CD8-positive, alpha-beta T cell (primary cell): ENCODE measurements at regions of chr18 and their contacts with region 1.

Region 1: GRCh38 chr18:31610286-31611205 is 18.9 kb downstream of the TTR start:
- DNase-seq: peak in 2 of 9 experiments; percentile 5 to 22
- ATAC-seq: no peak
- H3K4me3 ChIP-seq: no peak overlapping the region
- H3K4me3 Mint-ChIP-seq: no peak overlapping the region
- H3K27ac ChIP-seq: no peak overlapping the region
- H3K27ac Mint-ChIP-seq: no peak overlapping the region
- H3K4me1 ChIP-seq: no peaks in the 10 kb centered on the region
- H3K4me1 Mint-ChIP-seq: no peaks in the 10 kb centered on the region
- H3K27me3 ChIP-seq: no peaks in the 10 kb centered on the region
- H3K27me3 Mint-ChIP-seq: no peaks in the 10 kb centered on the region
- CTCF ChIP-seq: no peak

Region 2: DNA sequence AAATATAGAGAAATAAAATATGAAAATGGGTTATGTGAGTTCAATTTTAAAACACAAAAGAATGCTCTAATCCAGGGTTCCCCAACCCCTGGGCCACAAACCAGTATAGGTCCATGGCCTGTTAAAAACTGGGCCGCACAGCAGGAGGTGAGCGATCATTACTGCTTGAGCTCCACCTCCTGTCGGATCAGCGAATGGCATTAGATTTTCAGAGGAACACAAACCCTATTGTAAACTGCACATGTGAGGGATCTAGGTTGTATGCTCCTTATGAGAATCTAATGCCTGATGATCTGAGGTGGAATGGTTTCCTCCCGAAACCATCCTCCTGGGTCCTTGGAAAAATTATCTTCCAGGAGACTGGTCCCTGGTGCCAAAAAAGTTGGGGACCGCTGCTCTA is 15.9 kb after region 1 on chr18:
- CTCF ChIA-PET with region 1: no interaction called
- POLR2A ChIA-PET with region 1: no interaction called
- intact Hi-C with region 1: loop called in 1 of 2 experiments (anchors 1 kb)
- DNase-seq: no peak
- ATAC-seq: no peak
- H3K4me3 ChIP-seq: no peak overlapping the region
- H3K4me3 Mint-ChIP-seq: no peak overlapping the region
- H3K27ac ChIP-seq: no peak overlapping the region
- H3K27ac Mint-ChIP-seq: no peak overlapping the region
- H3K4me1 ChIP-seq: no peaks in the 10 kb centered on the region
- H3K4me1 Mint-ChIP-seq: no peaks in the 10 kb centered on the region
- H3K27me3 ChIP-seq: no peaks in the 10 kb centered on the region
- H3K27me3 Mint-ChIP-seq: no peaks in the 10 kb centered on the region
- CTCF ChIP-seq: no peak

Region 3: DNA sequence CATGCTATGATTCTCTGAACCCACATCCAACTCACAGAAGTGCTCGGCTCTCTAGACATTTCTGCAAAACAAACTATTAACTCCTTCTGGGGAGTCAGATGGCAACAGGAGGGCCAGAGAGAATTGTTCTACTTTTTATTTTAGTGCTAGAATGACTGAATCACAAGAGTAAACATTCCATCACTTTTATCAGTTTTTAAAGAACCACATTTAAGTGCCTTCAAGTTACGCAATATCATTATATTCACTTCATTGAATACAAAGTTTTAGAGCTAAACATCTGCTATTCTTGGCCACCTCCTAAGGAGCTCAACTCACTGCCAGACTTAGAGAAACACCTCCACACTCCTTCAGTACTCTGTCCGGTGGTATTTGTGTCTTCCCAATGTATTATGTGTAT is 51.4 kb after region 1 on chr18:
- CTCF ChIA-PET with region 1: no interaction called
- POLR2A ChIA-PET with region 1: no interaction called
- intact Hi-C with region 1: loop called in 1 of 2 experiments (anchors 10 kb)
- DNase-seq: no peak
- ATAC-seq: no peak
- H3K4me3 ChIP-seq: no peak overlapping the region
- H3K4me3 Mint-ChIP-seq: no peak overlapping the region
- H3K27ac ChIP-seq: no peak overlapping the region
- H3K27ac Mint-ChIP-seq: no peak overlapping the region
- H3K4me1 ChIP-seq: no peaks in the 10 kb centered on the region
- H3K4me1 Mint-ChIP-seq: peaks cover 2% of the 10 kb centered on the region
- H3K27me3 ChIP-seq: no peaks in the 10 kb centered on the region
- H3K27me3 Mint-ChIP-seq: peaks cover 2% of the 10 kb centered on the region
- CTCF ChIP-seq: no peak

Region 4: DNA sequence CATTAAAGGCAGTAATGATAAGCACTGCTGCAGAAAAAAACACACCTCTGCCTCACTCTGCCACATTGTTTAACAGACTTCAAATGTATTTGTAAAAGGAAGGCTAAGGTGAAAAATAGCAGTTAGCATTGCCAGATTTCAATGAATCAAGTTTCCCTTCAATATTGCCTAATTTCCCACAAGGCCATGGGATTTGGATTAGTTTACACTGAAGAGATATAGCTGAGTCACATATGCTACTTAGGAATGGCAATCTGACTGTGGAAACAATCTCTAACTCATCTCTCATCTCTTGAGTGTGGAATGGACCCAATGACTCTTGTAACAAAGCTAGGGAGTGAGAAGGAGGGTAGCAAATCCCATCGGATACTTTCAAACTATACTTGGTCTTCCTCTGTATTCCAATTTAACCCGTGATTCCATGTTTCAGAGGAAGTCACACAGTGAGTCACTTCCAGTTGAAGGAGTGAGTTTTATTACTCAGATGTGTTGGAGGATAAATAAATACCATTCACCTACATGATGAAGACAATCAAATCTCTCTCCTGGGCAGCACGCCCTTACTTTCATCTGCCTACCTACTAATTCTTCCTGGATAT is 68.7 kb after region 1 on chr18:
- CTCF ChIA-PET with region 1: no interaction called
- POLR2A ChIA-PET with region 1: no interaction called
- intact Hi-C with region 1: no loop called
- DNase-seq: no peak
- ATAC-seq: no peak
- H3K4me3 ChIP-seq: no peak overlapping the region
- H3K4me3 Mint-ChIP-seq: no peak overlapping the region
- H3K27ac ChIP-seq: no peak overlapping the region
- H3K27ac Mint-ChIP-seq: no peak overlapping the region
- H3K4me1 ChIP-seq: no peaks in the 10 kb centered on the region
- H3K4me1 Mint-ChIP-seq: peaks cover 7% of the 10 kb centered on the region
- H3K27me3 ChIP-seq: peaks cover 0 to 5% of the 10 kb centered on the region in 2 experiments
- H3K27me3 Mint-ChIP-seq: peaks cover 36% of the 10 kb centered on the region
- CTCF ChIP-seq: no peak

Region 5: DNA sequence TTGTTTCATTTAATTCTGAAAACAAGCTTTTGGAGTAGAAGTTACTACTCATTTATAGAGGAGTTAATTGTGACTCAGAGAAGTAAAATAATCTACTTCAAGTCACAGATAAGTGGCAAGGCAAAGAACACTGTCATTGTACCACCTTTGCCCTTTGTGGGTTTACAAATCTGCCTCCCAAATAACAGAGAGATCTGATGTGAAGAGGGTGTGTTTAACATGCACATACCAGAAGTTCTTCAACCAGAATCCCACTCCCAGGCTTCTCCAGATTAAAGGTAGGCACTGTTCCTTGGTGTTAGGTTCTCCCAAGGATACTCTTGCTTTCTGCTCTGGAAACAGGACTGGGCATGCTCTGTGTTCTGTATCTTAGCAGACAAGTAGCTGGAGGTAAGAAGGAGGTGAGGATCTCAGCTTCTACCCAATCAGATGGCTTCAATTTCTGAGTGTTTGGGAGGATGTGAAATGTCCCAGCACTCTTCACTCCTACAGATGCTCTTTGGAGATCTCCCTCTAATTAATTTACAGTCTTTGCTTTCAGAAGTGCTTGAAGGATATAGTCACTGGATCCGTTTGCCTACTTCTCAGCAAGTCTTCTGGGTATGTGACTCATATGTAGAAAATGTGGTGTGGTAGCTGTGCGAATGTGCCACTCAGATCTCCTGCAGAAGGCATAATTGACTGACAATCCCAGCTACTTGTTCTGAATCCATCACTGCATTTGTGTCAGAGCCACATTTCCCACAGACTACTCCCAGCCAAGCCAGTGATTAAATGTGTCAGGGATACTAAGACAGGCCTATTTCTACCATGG is 1051.1 kb after region 1 on chr18:
- CTCF ChIA-PET with region 1: no interaction called
- POLR2A ChIA-PET with region 1: no interaction called
- intact Hi-C with region 1: no loop called
- DNase-seq: no peak
- ATAC-seq: no peak
- H3K4me3 ChIP-seq: no peak overlapping the region
- H3K4me3 Mint-ChIP-seq: no peak overlapping the region
- H3K27ac ChIP-seq: no peak overlapping the region
- H3K27ac Mint-ChIP-seq: no peak overlapping the region
- H3K4me1 ChIP-seq: no peaks in the 10 kb centered on the region
- H3K4me1 Mint-ChIP-seq: no peaks in the 10 kb centered on the region
- H3K27me3 ChIP-seq: no peaks in the 10 kb centered on the region
- H3K27me3 Mint-ChIP-seq: no peaks in the 10 kb centered on the region
- CTCF ChIP-seq: no peak